T-cell (primary cell): ENCODE measurements at regions of chr2 and their contacts with region 1.

Region 1: GRCh38 chr2:74991977-74992376 is 33.5 kb downstream of the POLE4 start:
- DNase-seq: no peak
- ATAC-seq: no peak
- H3K4me3 ChIP-seq: no peak overlapping the region
- H3K4me3 Mint-ChIP-seq: no peak overlapping the region
- H3K27ac ChIP-seq: no peak overlapping the region
- H3K27ac Mint-ChIP-seq: no peak overlapping the region
- H3K4me1 ChIP-seq: no peaks in the 10 kb centered on the region
- H3K4me1 Mint-ChIP-seq: no peaks in the 10 kb centered on the region
- H3K27me3 ChIP-seq: no peaks in the 10 kb centered on the region
- H3K27me3 Mint-ChIP-seq: no peaks in the 10 kb centered on the region

Region 2: DNA sequence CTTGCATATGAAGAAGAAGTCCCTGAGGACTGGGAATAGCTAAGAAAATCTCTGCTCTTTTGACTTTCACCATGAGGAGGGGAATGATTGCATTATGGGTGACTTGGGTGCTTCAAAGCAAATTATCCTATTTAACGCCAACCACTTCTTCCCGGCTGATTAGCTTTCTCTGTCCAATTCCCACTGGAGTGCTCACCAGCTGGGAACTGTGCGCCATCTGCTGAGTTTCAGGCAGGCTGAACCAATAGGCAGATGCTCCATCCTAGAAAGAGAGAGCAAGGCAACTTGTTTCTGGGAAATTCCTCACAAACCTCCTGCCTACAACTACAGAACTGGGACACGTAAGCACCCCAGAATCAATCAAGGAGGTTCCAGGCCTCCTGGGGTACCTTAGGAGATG is 15.8 kb after region 1 on chr2:
- CTCF ChIA-PET with region 1: interaction called in 1 of 2 experiments, 12 read pairs
- POLR2A ChIA-PET with region 1: interaction called, 3 to 8 read pairs
- DNase-seq: no peak
- ATAC-seq: no peak
- H3K4me3 ChIP-seq: no peak overlapping the region
- H3K4me3 Mint-ChIP-seq: no peak overlapping the region
- H3K27ac ChIP-seq: no peak overlapping the region
- H3K27ac Mint-ChIP-seq: no peak overlapping the region
- H3K4me1 ChIP-seq: no peaks in the 10 kb centered on the region
- H3K4me1 Mint-ChIP-seq: no peaks in the 10 kb centered on the region
- H3K27me3 ChIP-seq: no peaks in the 10 kb centered on the region
- H3K27me3 Mint-ChIP-seq: no peaks in the 10 kb centered on the region